ENCODE measurements at regions of chr19 and their contacts with region 1.

Region 1: DNA sequence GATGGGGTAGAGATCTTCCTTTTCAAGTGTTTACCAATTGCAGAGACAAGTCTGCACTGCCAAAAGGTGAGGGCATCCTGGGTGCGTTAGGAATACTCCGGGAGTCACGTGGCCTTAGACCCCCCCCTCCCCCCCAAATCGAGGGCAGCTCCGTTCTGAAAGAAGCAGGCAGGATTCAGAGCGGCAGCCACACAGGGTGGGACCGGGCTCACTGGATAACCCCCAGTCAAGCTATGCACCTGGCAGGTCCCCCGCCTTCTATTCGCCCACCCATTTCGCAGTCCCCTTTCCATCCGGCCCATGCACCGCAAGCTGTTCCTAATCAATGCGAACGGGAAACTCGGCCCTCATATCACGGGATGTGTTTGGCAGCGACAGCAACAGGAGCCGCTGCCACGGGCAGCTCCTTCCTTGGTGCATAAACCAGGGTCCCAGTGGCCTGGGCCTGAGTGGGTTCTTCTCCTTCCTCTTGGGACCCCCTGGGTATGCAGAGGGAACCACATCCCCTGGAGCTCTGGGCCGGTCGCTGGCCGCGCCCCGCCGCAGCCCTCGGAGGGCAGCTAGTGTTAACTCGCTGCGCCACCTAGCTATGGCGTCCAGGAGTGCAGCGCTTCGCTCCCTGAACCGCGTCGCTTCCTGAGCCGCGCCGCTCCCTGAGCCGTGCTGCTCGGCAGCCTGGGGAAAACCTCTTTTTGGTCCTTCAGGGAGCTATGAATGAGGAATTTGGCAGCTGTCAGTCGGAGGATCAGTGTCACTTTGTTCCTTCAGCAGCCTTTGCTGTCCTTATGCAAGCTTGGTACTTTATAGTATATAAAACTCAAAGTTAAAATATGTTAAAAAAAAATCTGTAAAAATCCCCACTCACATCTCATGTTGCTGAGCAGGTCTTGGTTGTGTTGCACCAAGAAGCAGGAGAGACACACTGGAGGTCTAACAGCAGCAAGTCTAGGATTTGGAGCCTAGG is 41.4 kb downstream of the LYL1 start:
- DNase-seq: peak; percentile 54
- H3K4me3 ChIP-seq: peak overlapping the region; percentile 7
- CTCF ChIP-seq: peak; percentile 96

Region 2: DNA sequence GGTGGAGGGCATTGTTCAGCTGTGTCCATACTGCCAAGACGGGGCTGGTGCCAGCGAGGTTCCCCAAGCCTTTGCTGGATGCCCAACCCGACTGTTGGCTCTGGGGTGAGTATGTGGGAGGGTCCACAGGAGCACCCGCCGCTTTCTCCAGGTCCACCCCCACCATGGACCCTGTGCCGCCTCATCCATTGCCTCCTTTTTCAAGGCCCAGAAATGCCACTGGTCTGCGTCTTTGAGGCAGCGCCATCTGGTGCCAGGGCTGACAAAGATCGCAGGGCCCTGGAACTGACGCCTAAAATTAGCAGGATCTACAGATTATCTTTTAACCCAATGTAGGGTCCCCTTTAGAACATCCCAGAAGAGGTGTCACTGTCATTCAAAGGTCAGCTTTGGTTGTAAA is 31.4 kb before region 1 on chr19:
- in situ Hi-C with region 1: loop called (anchors 5 kb)
- DNase-seq: no peak
- H3K4me3 ChIP-seq: peak overlapping the region; percentile 84
- CTCF ChIP-seq: peak; percentile 74

Region 3: DNA sequence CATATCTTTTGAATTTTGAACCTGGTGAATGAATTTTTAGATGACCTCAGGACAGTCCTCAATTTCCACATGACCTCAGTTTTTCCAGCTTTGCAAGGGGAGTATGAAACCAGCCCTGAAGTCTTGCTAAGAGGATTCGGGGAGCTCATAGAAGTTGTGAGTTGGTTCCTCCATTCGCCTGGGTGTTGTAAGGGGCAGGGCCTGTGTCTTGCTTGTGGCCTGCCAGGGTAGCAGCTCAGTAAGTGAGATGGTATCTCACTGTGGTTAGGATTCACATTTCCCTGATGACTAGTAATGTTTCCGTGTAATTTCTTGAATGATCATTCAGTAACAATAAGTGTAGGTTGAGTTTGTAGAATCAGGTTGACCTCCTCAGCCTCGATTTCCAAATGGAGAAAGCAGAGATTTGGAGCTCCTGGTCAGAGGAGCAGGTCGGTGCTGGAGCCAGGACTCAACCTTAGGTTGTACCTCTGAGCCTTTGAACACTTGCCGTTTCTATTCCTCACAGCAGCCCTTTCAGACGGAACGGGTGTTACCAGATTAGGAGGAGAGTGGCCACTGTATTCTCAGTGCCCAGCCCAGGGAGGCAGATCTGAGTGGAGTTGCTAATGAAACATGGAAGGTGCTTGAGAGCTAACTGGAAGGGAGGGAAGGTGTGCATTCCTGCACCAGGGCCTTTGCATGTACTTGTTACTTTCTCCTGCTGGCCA is 71.4 kb after region 1 on chr19:
- in situ Hi-C with region 1: no loop called
- DNase-seq: no peak
- H3K4me3 ChIP-seq: no peak overlapping the region
- CTCF ChIP-seq: no peak

Region 4: GRCh38 chr19:13234518-13234917 is 173.3 kb after region 1 on chr19:
- in situ Hi-C with region 1: loop called (anchors 25 kb)
- DNase-seq: no peak
- H3K4me3 ChIP-seq: no peak overlapping the region
- CTCF ChIP-seq: peak; percentile 19

Measured in astrocyte of the cerebellum (primary cell).